HEK293 (cell line): ENCODE measurements at regions of chr4 and their contacts with region 1.

Region 1: DNA sequence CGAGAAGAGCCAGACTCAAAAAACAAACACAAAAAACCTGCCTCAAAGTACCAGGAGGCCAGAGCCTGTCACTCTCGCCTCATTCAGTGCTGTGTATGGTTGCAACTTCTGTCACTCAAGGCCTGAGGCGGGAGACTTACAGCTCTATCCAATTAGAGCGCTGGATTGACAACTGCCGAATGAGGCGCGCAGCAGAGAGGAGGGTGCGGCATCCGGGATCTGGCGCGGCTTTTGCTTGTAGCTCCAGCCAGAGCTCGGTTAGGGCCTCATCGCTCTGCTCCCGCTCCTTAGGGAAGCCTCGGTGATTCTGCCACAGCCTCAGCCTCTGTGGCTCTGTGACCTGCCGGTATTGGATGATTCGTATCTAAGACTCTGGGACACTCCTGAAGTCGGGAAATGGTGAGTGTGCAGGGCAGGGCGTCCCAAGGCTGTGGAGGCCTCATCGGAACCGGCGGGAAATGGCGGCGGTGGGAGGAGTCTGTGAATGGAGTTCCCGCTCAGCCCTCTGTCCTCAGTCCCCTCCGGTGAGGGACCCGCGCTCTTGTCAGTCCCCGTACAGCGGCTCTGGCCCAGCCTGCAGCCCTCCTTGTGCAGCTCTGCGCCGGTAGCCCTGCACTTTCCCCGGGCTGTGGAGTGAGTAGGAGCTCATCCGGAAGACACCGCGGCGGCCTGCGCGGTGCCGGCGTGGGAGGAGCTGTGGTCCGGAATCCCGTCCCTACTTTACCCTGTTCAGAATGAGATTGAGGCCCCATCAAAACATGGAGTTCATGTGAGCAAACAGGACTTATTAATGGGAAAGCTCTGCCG is at the start of gene ZNF718:
- H3K4me3 ChIP-seq: peak within 1 kb of the TSS; percentile 88
- H3K27ac ChIP-seq: peak within 1 kb of the TSS; percentile 77
- H3K4me1 ChIP-seq: no peaks in the 10 kb centered on the region
- CTCF ChIP-seq: no peak

Region 2: GRCh38 chr4:85951-86350 is 38.5 kb before region 1 on chr4:
- CTCF ChIA-PET with region 1: no interaction called
- POLR2A ChIA-PET with region 1: no interaction called
- H3K4me3 ChIP-seq: no peak overlapping the region
- H3K27ac ChIP-seq: no peak overlapping the region
- H3K4me1 ChIP-seq: no peaks in the 10 kb centered on the region
- CTCF ChIP-seq: no peak

Region 3: DNA sequence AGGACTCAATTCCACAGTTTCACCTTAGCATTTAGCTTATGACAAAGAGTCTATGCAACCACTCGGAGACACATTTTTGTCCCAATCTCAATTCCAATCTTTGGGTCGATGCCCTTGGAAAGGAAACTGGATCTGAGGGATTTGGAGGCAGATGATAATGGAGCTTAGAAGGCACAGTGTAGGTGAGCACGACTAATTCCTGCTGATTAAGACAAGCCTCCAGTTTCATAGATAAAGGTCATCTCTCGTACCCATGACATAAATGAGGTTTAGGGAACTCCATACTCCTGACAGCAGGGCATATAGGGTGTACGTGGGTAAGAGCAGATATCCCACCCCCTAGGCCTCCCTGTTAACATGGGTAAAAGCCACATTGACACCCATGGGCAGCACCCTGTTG is 24.6 kb before region 1 on chr4:
- CTCF ChIA-PET with region 1: no interaction called
- POLR2A ChIA-PET with region 1: no interaction called
- H3K4me3 ChIP-seq: no peak overlapping the region
- H3K27ac ChIP-seq: no peak overlapping the region
- H3K4me1 ChIP-seq: no peaks in the 10 kb centered on the region
- CTCF ChIP-seq: no peak

Region 4: DNA sequence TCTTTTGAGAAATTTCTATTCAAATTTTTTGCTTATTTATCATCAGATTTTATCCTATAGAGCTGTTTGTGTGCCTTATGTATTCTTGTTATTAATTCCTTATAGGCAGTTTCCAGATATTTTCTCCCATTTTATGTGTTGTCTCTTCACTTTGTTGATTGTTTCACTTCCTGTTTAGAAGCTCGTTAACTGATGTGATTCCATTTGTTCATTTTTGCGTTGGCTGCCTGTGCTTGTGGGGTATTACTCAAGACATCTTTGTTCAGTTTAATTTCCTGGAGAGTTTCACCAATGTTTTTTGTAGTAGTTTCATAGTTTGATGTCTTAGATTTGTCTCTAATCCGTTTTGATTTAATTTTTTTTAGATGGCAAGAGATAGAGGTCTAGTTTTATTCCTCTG is 14.5 kb after region 1 on chr4:
- CTCF ChIA-PET with region 1: no interaction called
- POLR2A ChIA-PET with region 1: interaction called, 12 read pairs
- H3K4me3 ChIP-seq: no peak overlapping the region
- H3K27ac ChIP-seq: no peak overlapping the region
- H3K4me1 ChIP-seq: no peaks in the 10 kb centered on the region
- CTCF ChIP-seq: no peak